ENCODE measurements at regions of chr10 and their contacts with region 1.

Region 1: DNA sequence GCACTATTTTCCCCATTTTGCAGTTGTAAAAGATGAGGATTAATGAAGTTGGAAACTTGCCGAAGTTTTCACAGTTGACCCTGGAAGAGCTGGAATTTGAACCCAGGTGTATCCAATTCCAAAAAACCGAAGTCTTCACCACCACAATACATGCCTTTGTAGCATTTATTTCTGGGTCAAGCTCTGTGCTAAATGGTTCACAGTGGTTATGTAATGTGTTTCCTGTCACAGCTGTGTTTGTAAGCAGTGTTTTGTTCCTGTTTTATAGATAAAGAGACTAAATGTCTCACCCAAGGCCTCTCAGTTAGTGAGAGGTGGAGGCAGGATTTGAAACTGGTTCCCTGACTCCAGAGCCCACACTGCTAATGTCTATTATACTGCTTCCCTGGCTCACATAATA is 17.6 kb downstream of the SFTPA2 start:
- DNase-seq: peak in 1 of 14 experiments; percentile 23
- ATAC-seq: no peak
- H3K4me3 ChIP-seq: no peak overlapping the region
- H3K4me3 Mint-ChIP-seq: no peak overlapping the region
- H3K27ac ChIP-seq: no peak overlapping the region
- H3K27ac Mint-ChIP-seq: no peak overlapping the region
- H3K4me1 ChIP-seq: peaks cover 7% of the 10 kb centered on the region
- H3K4me1 Mint-ChIP-seq: peaks cover 8% of the 10 kb centered on the region
- H3K27me3 ChIP-seq: no peaks in the 10 kb centered on the region
- H3K27me3 Mint-ChIP-seq: no peaks in the 10 kb centered on the region
- CTCF ChIP-seq: no peak

Region 2: GRCh38 chr10:78491812-78492211 is 1050.8 kb before region 1 on chr10:
- CTCF ChIA-PET with region 1: no interaction called
- POLR2A ChIA-PET with region 1: no interaction called
- intact Hi-C with region 1: no loop called
- DNase-seq: no peak
- ATAC-seq: no peak
- H3K4me3 ChIP-seq: no peak overlapping the region
- H3K4me3 Mint-ChIP-seq: no peak overlapping the region
- H3K27ac ChIP-seq: no peak overlapping the region
- H3K27ac Mint-ChIP-seq: no peak overlapping the region
- H3K4me1 ChIP-seq: no peaks in the 10 kb centered on the region
- H3K4me1 Mint-ChIP-seq: no peaks in the 10 kb centered on the region
- H3K27me3 ChIP-seq: peaks cover 0 to 13% of the 10 kb centered on the region in 2 experiments
- H3K27me3 Mint-ChIP-seq: peaks cover 41% of the 10 kb centered on the region
- CTCF ChIP-seq: no peak

Region 3: GRCh38 chr10:79127151-79127961 is 415.3 kb before region 1 on chr10:
- CTCF ChIA-PET with region 1: no interaction called
- POLR2A ChIA-PET with region 1: no interaction called
- intact Hi-C with region 1: no loop called
- DNase-seq: peak in 2 of 14 experiments; percentile 48 to 57
- ATAC-seq: no peak
- H3K4me3 ChIP-seq: no peak overlapping the region
- H3K4me3 Mint-ChIP-seq: no peak overlapping the region
- H3K27ac ChIP-seq: no peak overlapping the region
- H3K27ac Mint-ChIP-seq: no peak overlapping the region
- H3K4me1 ChIP-seq: peaks cover 3% of the 10 kb centered on the region
- H3K4me1 Mint-ChIP-seq: peaks cover 26% of the 10 kb centered on the region
- H3K27me3 ChIP-seq: no peaks in the 10 kb centered on the region
- H3K27me3 Mint-ChIP-seq: no peaks in the 10 kb centered on the region
- CTCF ChIP-seq: no peak

Region 4: GRCh38 chr10:79454259-79454658 is 88.4 kb before region 1 on chr10:
- CTCF ChIA-PET with region 1: no interaction called
- POLR2A ChIA-PET with region 1: no interaction called
- intact Hi-C with region 1: no loop called
- DNase-seq: no peak
- ATAC-seq: no peak
- H3K4me3 ChIP-seq: no peak overlapping the region
- H3K4me3 Mint-ChIP-seq: no peak overlapping the region
- H3K27ac ChIP-seq: no peak overlapping the region
- H3K27ac Mint-ChIP-seq: no peak overlapping the region
- H3K4me1 ChIP-seq: no peaks in the 10 kb centered on the region
- H3K4me1 Mint-ChIP-seq: no peaks in the 10 kb centered on the region
- H3K27me3 ChIP-seq: no peaks in the 10 kb centered on the region
- H3K27me3 Mint-ChIP-seq: peaks cover 4% of the 10 kb centered on the region
- CTCF ChIP-seq: no peak

Region 5: DNA sequence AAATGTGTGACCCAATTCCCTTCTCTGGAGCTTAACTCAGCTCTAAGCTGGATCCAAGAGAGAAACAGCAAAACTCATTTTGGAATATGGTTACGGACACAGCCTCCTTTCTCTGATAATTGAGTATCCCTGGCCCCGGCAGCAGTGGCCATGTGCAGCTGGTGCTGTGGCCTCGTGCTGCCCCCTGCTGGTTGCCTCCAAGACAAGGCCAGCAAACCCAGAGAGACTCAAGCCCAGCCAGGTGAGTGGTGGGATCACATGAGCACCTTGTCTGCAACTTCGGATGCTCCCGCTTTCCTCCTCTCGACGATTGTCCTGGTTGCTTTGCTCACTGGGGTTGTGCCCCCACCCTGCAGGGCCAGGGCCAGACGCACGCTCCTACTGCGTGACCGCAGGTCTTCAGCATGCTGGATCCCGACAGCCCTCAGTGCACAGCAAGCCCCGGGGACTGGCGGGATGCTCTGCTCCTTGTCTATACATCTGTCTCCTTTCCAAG is 386.8 kb after region 1 on chr10:
- CTCF ChIA-PET with region 1: no interaction called
- POLR2A ChIA-PET with region 1: no interaction called
- intact Hi-C with region 1: loop called in 1 of 2 experiments (anchors 5 kb)
- DNase-seq: peak; percentile 44 to 85 (median 66)
- ATAC-seq: peak; percentile 46
- H3K4me3 ChIP-seq: no peak overlapping the region
- H3K4me3 Mint-ChIP-seq: no peak overlapping the region
- H3K27ac ChIP-seq: no peak overlapping the region
- H3K27ac Mint-ChIP-seq: no peak overlapping the region
- H3K4me1 ChIP-seq: peaks cover 7% of the 10 kb centered on the region
- H3K4me1 Mint-ChIP-seq: no peaks in the 10 kb centered on the region
- H3K27me3 ChIP-seq: peaks cover 0 to 10% of the 10 kb centered on the region in 2 experiments
- H3K27me3 Mint-ChIP-seq: peaks cover 36% of the 10 kb centered on the region
- CTCF ChIP-seq: peak; percentile 65

Region 6: DNA sequence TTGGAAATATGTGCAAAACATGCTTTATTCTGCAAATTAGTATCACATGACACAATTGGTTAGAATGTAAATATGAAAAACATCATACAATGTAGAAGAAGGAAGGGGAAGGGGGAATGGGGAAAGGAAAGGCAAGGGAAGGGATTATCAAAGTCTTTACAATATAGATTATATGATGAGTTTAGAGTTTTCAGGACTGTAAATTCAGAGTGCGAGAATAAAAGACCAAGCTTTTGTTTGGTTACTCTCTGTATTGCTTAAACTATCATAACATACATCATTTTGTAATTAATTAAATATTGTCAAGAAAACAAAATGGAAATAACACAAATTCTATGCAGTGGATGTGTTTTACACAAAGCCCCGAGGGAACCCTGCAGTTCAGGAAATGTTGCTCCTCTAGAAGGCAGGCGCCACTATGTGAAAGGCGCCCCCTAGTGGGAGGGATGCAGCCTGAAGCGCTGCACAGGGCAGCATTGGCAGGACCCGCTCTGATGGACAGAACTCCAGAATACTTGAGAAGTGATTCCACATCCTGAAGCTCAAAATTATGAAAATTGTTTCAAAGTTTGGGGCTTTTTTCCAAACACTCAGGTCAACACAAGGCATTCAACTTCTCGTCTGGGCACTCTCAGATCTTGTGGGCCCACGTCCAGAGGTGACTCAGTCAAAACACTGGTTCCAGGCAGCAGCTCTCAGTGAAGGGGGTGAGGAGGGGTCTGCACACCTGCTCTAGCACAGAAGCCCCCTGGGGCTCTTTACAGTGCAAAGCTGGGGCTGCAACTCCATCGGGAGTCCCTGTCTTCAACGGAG is 504.2 kb after region 1 on chr10:
- CTCF ChIA-PET with region 1: no interaction called
- POLR2A ChIA-PET with region 1: no interaction called
- intact Hi-C with region 1: loop called in 1 of 2 experiments (anchors 10 kb)
- DNase-seq: peak; percentile 35 to 81 (median 62)
- ATAC-seq: peak; percentile 82
- H3K4me3 ChIP-seq: no peak overlapping the region
- H3K4me3 Mint-ChIP-seq: no peak overlapping the region
- H3K27ac ChIP-seq: no peak overlapping the region
- H3K27ac Mint-ChIP-seq: no peak overlapping the region
- H3K4me1 ChIP-seq: no peaks in the 10 kb centered on the region
- H3K4me1 Mint-ChIP-seq: no peaks in the 10 kb centered on the region
- H3K27me3 ChIP-seq: peaks cover 0 to 5% of the 10 kb centered on the region in 2 experiments
- H3K27me3 Mint-ChIP-seq: no peaks in the 10 kb centered on the region
- CTCF ChIP-seq: peak; percentile 87